ENCODE measurements at regions of chr2 and their contacts with region 1.

Region 1: GRCh38 chr2:232697100-232697865 is at the start of gene GIGYF2:
- DNase-seq: peak; percentile 78 to 95 (median 91)
- ATAC-seq: peak; percentile 83
- H3K4me3 ChIP-seq: peak within 1 kb of the TSS; percentile 89 to 92
- H3K4me3 Mint-ChIP-seq: peak within 1 kb of the TSS; percentile 94
- H3K27ac ChIP-seq: peak within 1 kb of the TSS; percentile 74 to 75
- H3K27ac Mint-ChIP-seq: peak within 1 kb of the TSS; percentile 89
- H3K4me1 ChIP-seq: peaks cover 41% of the 10 kb centered on the region
- H3K4me1 Mint-ChIP-seq: peaks cover 37% of the 10 kb centered on the region
- H3K27me3 ChIP-seq: no peaks in the 10 kb centered on the region
- H3K27me3 Mint-ChIP-seq: no peaks in the 10 kb centered on the region
- CTCF ChIP-seq: no peak
- total RNA-seq, gene GIGYF2: 40.5 to 52.2 TPM

Region 2: GRCh38 chr2:232550354-232551249 is 146.7 kb before region 1 on chr2 and contains the starts of genes EIF4E2 and TIGD1:
- CTCF ChIA-PET with region 1: no interaction called
- POLR2A ChIA-PET with region 1: no interaction called
- intact Hi-C with region 1: loop called (anchors 2 kb)
- DNase-seq: peak; percentile 78 to 94 (median 91)
- ATAC-seq: peak; percentile 82
- H3K4me3 ChIP-seq: peak within 1 kb of the TSS; percentile 74 to 91
- H3K4me3 Mint-ChIP-seq: peak within 1 kb of the TSS; percentile 100
- H3K27ac ChIP-seq: peak within 1 kb of the TSS; percentile 86 to 88
- H3K27ac Mint-ChIP-seq: peak within 1 kb of the TSS; percentile 100
- H3K4me1 ChIP-seq: peaks cover 28% of the 10 kb centered on the region
- H3K4me1 Mint-ChIP-seq: peaks cover 80% of the 10 kb centered on the region
- H3K27me3 ChIP-seq: no peaks in the 10 kb centered on the region
- H3K27me3 Mint-ChIP-seq: no peaks in the 10 kb centered on the region
- CTCF ChIP-seq: peak; percentile 55
- total RNA-seq, gene EIF4E2: 53.8 to 55.2 TPM
- total RNA-seq, gene TIGD1: 16.5 to 17.2 TPM

Region 3: DNA sequence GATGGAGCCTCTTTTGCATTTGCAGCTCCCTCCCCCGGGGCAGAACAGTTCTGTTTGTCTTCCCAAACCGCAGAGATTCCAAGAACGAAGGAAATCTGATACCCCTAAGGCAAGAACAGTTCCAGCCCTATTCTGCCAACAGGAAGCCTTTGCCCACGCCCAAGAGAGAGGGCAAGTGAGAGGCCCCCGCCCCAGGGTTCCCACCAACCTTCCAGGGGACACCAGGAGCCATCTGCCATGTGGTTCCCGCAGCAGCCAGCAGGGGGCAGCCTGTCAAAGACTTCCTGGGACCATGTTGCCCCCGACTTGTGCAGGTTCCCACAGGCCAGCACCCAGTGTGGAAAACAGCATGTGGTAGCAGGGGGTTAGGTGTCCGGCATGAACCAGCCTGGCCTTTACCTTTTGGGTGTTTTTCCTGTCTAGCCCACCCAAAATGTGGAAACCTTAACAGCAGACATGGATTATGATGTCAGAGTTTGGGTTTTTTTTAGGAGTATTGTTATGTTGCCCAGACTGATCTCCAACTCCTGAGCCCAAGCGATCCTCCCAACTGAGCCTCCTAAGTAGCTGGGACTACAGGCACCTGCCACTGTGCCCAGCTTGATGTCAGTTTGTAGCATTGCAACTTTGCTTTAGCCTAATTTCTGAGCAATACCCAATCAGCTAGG is 85.6 kb before region 1 on chr2:
- CTCF ChIA-PET with region 1: no interaction called
- POLR2A ChIA-PET with region 1: no interaction called
- intact Hi-C with region 1: loop called (anchors 1 to 5 kb)
- DNase-seq: peak; percentile 34 to 79 (median 72)
- ATAC-seq: peak; percentile 89
- H3K4me3 ChIP-seq: no peak overlapping the region
- H3K4me3 Mint-ChIP-seq: no peak overlapping the region
- H3K27ac ChIP-seq: no peak overlapping the region
- H3K27ac Mint-ChIP-seq: no peak overlapping the region
- H3K4me1 ChIP-seq: no peaks in the 10 kb centered on the region
- H3K4me1 Mint-ChIP-seq: no peaks in the 10 kb centered on the region
- H3K27me3 ChIP-seq: no peaks in the 10 kb centered on the region
- H3K27me3 Mint-ChIP-seq: peaks cover 3% of the 10 kb centered on the region
- CTCF ChIP-seq: peak; percentile 79

Region 4: DNA sequence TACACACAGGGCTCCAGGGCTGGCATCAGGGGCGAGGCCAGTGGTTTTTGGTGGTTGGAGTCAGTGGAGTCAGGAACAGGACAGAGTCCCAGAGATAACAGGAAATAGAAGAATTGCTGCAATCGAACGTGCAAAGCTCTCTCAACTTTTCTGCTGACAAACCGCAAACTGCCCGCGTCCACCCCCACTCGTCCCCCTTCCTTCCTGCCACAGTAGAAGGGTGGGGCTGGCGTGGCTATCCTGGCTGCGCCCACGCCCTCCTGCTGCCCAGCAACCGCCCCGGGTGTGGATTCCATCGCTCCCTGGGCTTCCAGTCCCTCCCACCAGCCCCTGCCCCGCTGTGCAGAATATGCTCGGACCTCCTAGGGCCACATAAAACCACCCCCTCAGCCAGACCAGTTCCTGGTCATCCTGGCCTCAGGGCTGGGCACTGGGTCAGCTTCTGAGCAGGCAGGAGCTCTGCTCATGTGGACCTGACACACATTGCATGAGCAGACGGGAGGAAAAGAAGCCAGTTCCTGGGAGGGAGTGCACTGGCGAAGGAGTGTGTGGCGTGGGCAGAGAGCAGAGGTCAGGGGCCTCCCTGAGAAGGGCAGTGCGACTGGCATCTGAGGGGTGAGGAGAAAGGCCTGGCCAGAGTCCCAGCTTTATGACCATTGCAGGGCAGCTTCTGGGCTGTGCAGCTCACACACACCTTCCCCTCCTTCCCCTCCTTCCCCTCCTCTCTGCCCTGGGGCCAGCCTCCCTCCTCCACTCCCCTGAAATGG is 468.8 kb after region 1 on chr2:
- CTCF ChIA-PET with region 1: no interaction called
- POLR2A ChIA-PET with region 1: no interaction called
- intact Hi-C with region 1: no loop called
- DNase-seq: peak in 5 of 9 experiments; percentile 6 to 58 (median 47)
- ATAC-seq: peak; percentile 26
- H3K4me3 ChIP-seq: no peak overlapping the region
- H3K4me3 Mint-ChIP-seq: no peak overlapping the region
- H3K27ac ChIP-seq: peak overlapping the region in 1 of 2 experiments; percentile 65
- H3K27ac Mint-ChIP-seq: no peak overlapping the region
- H3K4me1 ChIP-seq: peaks cover 14% of the 10 kb centered on the region
- H3K4me1 Mint-ChIP-seq: peaks cover 7% of the 10 kb centered on the region
- H3K27me3 ChIP-seq: no peaks in the 10 kb centered on the region
- H3K27me3 Mint-ChIP-seq: no peaks in the 10 kb centered on the region
- CTCF ChIP-seq: no peak

Region 5: GRCh38 chr2:233240897-233241296 is 543.6 kb after region 1 on chr2:
- CTCF ChIA-PET with region 1: no interaction called
- POLR2A ChIA-PET with region 1: no interaction called
- intact Hi-C with region 1: no loop called
- DNase-seq: peak in 3 of 9 experiments; percentile 17 to 63 (median 48)
- ATAC-seq: peak; percentile 62
- H3K4me3 ChIP-seq: peak overlapping the region in 1 of 2 experiments; percentile 3
- H3K4me3 Mint-ChIP-seq: peak overlapping the region; percentile 67
- H3K27ac ChIP-seq: peak overlapping the region in 1 of 2 experiments; percentile 4
- H3K27ac Mint-ChIP-seq: peak overlapping the region; percentile 87
- H3K4me1 ChIP-seq: peaks cover 45% of the 10 kb centered on the region
- H3K4me1 Mint-ChIP-seq: peaks cover 63% of the 10 kb centered on the region
- H3K27me3 ChIP-seq: no peaks in the 10 kb centered on the region
- H3K27me3 Mint-ChIP-seq: no peaks in the 10 kb centered on the region
- CTCF ChIP-seq: no peak

Region 6: GRCh38 chr2:233267516-233268245 is 570.4 kb after region 1 on chr2:
- CTCF ChIA-PET with region 1: no interaction called
- POLR2A ChIA-PET with region 1: no interaction called
- intact Hi-C with region 1: loop called in 1 of 2 experiments (anchors 5 kb)
- DNase-seq: peak; percentile 68 to 98 (median 84)
- ATAC-seq: peak; percentile 89
- H3K4me3 ChIP-seq: peak overlapping the region in 1 of 2 experiments; percentile 2
- H3K4me3 Mint-ChIP-seq: peak overlapping the region; percentile 68
- H3K27ac ChIP-seq: peak overlapping the region; percentile 62 to 95
- H3K27ac Mint-ChIP-seq: peak overlapping the region; percentile 94
- H3K4me1 ChIP-seq: peaks cover 59% of the 10 kb centered on the region
- H3K4me1 Mint-ChIP-seq: peaks cover 75% of the 10 kb centered on the region
- H3K27me3 ChIP-seq: no peaks in the 10 kb centered on the region
- H3K27me3 Mint-ChIP-seq: no peaks in the 10 kb centered on the region
- CTCF ChIP-seq: no peak

Region 7: GRCh38 chr2:233566141-233566960 is 869.1 kb after region 1 on chr2 and contains the start of gene USP40:
- CTCF ChIA-PET with region 1: no interaction called
- POLR2A ChIA-PET with region 1: no interaction called
- intact Hi-C with region 1: loop called in 1 of 2 experiments (anchors 5 kb)
- DNase-seq: peak; percentile 17 to 75 (median 54)
- ATAC-seq: peak; percentile 81
- H3K4me3 ChIP-seq: peak within 1 kb of the TSS; percentile 93 to 99
- H3K4me3 Mint-ChIP-seq: peak within 1 kb of the TSS; percentile 96
- H3K27ac ChIP-seq: peak within 1 kb of the TSS; percentile 83 to 91
- H3K27ac Mint-ChIP-seq: peak within 1 kb of the TSS; percentile 97
- H3K4me1 ChIP-seq: peaks cover 9% of the 10 kb centered on the region
- H3K4me1 Mint-ChIP-seq: peaks cover 14% of the 10 kb centered on the region
- H3K27me3 ChIP-seq: no peaks in the 10 kb centered on the region
- H3K27me3 Mint-ChIP-seq: no peaks in the 10 kb centered on the region
- CTCF ChIP-seq: no peak
- total RNA-seq, gene USP40: 11.0 to 13.1 TPM